ENCODE measurements at regions of chr10 and their contacts with region 1.

Region 1: DNA sequence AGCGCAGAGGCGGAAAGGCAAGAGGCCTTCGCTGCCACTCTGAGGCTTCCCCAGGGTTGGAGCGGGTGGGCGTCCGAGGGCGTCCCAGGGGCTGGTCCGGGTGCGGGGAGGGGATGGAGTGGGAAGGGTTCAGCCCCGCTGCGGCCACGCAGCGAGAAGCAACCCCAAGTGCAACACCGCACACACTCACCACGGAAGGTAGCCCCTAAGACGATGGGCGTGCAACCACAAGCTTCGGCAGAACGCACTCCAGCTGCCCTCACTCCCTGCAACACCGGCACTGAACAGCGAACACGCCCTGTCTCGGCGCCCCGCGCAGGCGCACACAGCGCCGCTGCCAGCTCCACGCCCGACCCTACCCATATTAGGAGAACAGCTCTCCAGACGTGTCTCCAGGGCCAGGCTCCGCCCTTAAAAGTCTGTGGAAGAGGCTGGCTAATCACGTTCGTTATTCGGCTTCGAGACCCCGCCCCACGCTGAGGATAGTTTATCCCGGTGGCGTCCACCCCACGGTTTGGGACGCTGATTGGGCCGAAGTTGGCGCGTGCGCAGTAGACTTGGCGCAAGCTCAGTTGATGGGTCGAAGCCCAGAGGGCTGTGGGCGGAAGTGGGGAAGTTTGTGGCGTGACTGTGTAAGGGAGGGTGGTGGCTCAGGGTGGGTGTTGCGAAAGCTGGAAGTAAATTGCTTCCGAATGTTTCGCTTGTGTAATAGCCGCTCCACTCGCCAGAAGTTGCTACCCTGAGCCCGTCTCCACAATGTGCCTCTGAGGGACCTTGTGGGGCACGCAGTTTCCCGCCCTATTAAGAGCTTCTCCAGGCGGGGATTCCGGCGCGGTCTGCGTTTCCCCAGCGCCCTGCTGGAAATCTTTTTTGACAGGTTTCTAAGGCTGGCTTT is at the start of gene RSU1:
- DNase-seq: peak; percentile 100
- ATAC-seq: peak; percentile 98
- H3K4me3 ChIP-seq: peak within 1 kb of the TSS; percentile 68 to 92 (median 92)
- H3K4me3 Mint-ChIP-seq: peak within 1 kb of the TSS; percentile 92
- H3K27ac ChIP-seq: peak within 1 kb of the TSS; percentile 78
- H3K27ac Mint-ChIP-seq: peak within 1 kb of the TSS; percentile 98
- H3K4me1 ChIP-seq: peaks cover 13 to 15% of the 10 kb centered on the region in 2 donors
- H3K4me1 Mint-ChIP-seq: peaks cover 30% of the 10 kb centered on the region
- H3K27me3 ChIP-seq: peaks cover 0 to 2% (median 0%) of the 10 kb centered on the region in 4 experiments
- H3K27me3 Mint-ChIP-seq: peaks cover 5% of the 10 kb centered on the region
- CTCF ChIP-seq: no peak
- total RNA-seq, gene RSU1: 37.2 and 41.1 TPM in 2 replicates

Region 2: GRCh38 chr10:15859906-15860691 is 957.3 kb before region 1 on chr10 and contains the start of gene MINDY3:
- CTCF ChIA-PET with region 1: no interaction called
- POLR2A ChIA-PET with region 1: interaction called, 3 read pairs
- intact Hi-C with region 1: loop called (anchors 1 kb)
- DNase-seq: peak; percentile 89
- ATAC-seq: peak; percentile 93
- H3K4me3 ChIP-seq: peak within 1 kb of the TSS; percentile 86 to 94 (median 92)
- H3K4me3 Mint-ChIP-seq: peak within 1 kb of the TSS; percentile 100
- H3K27ac ChIP-seq: peak within 1 kb of the TSS; percentile 76 to 85
- H3K27ac Mint-ChIP-seq: peak within 1 kb of the TSS; percentile 97
- H3K4me1 ChIP-seq: peaks cover 18 to 21% of the 10 kb centered on the region in 2 donors
- H3K4me1 Mint-ChIP-seq: peaks cover 38% of the 10 kb centered on the region
- H3K27me3 ChIP-seq: peaks cover 0 to 5% (median 2%) of the 10 kb centered on the region in 4 experiments
- H3K27me3 Mint-ChIP-seq: peaks cover 18% of the 10 kb centered on the region
- CTCF ChIP-seq: no peak
- total RNA-seq, gene MINDY3: 29.3 and 31.9 TPM in 2 replicates

Region 3: GRCh38 chr10:16436758-16437539 is 380.4 kb before region 1 on chr10 and contains the start of gene PTER:
- CTCF ChIA-PET with region 1: interaction called, 4 read pairs
- POLR2A ChIA-PET with region 1: interaction called, 4 read pairs
- intact Hi-C with region 1: loop called (anchors 1 kb)
- DNase-seq: peak; percentile 95
- ATAC-seq: peak; percentile 100
- H3K4me3 ChIP-seq: peak within 1 kb of the TSS; percentile 57 to 94 (median 84)
- H3K4me3 Mint-ChIP-seq: peak within 1 kb of the TSS; percentile 94
- H3K27ac ChIP-seq: peak within 1 kb of the TSS; percentile 65 to 69
- H3K27ac Mint-ChIP-seq: peak within 1 kb of the TSS; percentile 91
- H3K4me1 ChIP-seq: peaks cover 20 to 26% of the 10 kb centered on the region in 2 donors
- H3K4me1 Mint-ChIP-seq: peaks cover 45% of the 10 kb centered on the region
- H3K27me3 ChIP-seq: no peaks in the 10 kb centered on the region
- H3K27me3 Mint-ChIP-seq: peaks cover 7% of the 10 kb centered on the region
- CTCF ChIP-seq: no peak
- total RNA-seq, gene PTER: 17.5 and 18.6 TPM in 2 replicates

Region 4: GRCh38 chr10:16777473-16778370 is 39.6 kb before region 1 on chr10:
- CTCF ChIA-PET with region 1: interaction called, 3 read pairs
- POLR2A ChIA-PET with region 1: interaction called, 4 read pairs
- intact Hi-C with region 1: loop called (anchors 2 kb)
- DNase-seq: peak; percentile 68
- ATAC-seq: no peak
- H3K4me3 ChIP-seq: no peak overlapping the region
- H3K4me3 Mint-ChIP-seq: no peak overlapping the region
- H3K27ac ChIP-seq: no peak overlapping the region
- H3K27ac Mint-ChIP-seq: peak overlapping the region; percentile 65
- H3K4me1 ChIP-seq: peaks cover 10 to 14% of the 10 kb centered on the region in 2 donors
- H3K4me1 Mint-ChIP-seq: peaks cover 24% of the 10 kb centered on the region
- H3K27me3 ChIP-seq: no peaks in the 10 kb centered on the region
- H3K27me3 Mint-ChIP-seq: no peaks in the 10 kb centered on the region
- CTCF ChIP-seq: peak; percentile 87

Region 5: GRCh38 chr10:17200912-17201793 is 383.8 kb after region 1 on chr10 and contains the start of gene TRDMT1:
- CTCF ChIA-PET with region 1: no interaction called
- POLR2A ChIA-PET with region 1: interaction called, 4 read pairs
- intact Hi-C with region 1: loop called (anchors 1 kb)
- DNase-seq: peak; percentile 89
- ATAC-seq: peak; percentile 91
- H3K4me3 ChIP-seq: peak within 1 kb of the TSS; percentile 43 to 95 (median 70)
- H3K4me3 Mint-ChIP-seq: peak within 1 kb of the TSS; percentile 97
- H3K27ac ChIP-seq: peak within 1 kb of the TSS; percentile 56 to 89
- H3K27ac Mint-ChIP-seq: peak within 1 kb of the TSS; percentile 97
- H3K4me1 ChIP-seq: peaks cover 13 to 17% of the 10 kb centered on the region in 2 donors
- H3K4me1 Mint-ChIP-seq: peaks cover 27% of the 10 kb centered on the region
- H3K27me3 ChIP-seq: no peaks in the 10 kb centered on the region
- H3K27me3 Mint-ChIP-seq: no peaks in the 10 kb centered on the region
- CTCF ChIP-seq: no peak
- total RNA-seq, gene TRDMT1: 20.4 and 24.5 TPM in 2 replicates